ENCODE measurements at regions of chr1 and their contacts with region 1.

Region 1: GRCh38 chr1:207404849-207405525 is 49.1 kb upstream of the CR2 start:
- DNase-seq: peak in 1 of 2 experiments; percentile 79
- H3K4me3 ChIP-seq: no peak overlapping the region
- H3K4me1 ChIP-seq: no peaks in the 10 kb centered on the region
- H3K27me3 ChIP-seq: no peaks in the 10 kb centered on the region

Region 2: DNA sequence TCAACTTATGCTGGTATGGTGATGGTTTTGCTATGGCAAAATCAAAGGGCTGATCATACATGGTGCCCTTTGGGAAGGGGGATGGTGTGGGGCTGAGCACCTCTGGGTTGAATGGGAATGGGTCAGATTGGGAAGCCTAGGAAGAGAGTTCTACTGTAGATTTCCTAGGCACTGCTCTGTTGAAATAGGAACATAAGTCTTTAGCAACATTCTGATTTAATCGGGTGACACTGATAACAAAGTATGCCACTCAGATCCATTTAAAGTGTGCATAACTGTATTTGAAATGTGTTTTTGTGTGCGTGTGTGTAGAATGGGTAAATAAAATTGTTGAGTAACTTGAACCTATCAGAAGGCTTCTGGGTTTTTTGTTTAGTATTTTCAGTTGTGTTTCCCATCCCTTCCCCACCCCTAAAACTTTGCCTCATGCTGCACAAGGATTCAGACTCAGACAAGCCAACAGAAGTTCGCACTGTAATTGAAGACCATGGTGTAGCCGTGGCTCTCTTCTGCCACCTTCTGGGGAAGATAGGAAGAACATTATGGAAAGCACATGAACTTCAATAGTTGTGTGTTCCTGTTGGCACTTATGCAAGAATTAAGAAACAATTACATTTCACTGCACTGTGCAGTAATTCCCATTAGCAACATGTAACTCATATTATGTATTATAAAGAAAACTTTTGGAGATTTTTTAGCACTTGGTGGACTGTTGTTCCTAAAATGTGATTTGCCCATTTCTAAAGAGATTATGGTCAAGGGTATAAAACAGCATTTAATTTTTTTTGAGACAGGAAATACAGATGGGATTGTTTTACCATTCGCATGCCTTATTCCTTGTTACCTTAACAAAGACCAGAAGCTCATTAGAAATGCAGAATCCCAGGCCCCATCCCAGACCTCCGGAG is 327.3 kb before region 1 on chr1:
- in situ Hi-C with region 1: loop called (anchors 25 kb)
- DNase-seq: peak; percentile 60 to 76
- H3K4me3 ChIP-seq: no peak overlapping the region
- H3K4me1 ChIP-seq: peaks cover 3% of the 10 kb centered on the region; the same call in 1 of the 2 replicates
- H3K27me3 ChIP-seq: no peaks in the 10 kb centered on the region